ENCODE measurements at regions of chr5 and their contacts with region 1.

Region 1: DNA sequence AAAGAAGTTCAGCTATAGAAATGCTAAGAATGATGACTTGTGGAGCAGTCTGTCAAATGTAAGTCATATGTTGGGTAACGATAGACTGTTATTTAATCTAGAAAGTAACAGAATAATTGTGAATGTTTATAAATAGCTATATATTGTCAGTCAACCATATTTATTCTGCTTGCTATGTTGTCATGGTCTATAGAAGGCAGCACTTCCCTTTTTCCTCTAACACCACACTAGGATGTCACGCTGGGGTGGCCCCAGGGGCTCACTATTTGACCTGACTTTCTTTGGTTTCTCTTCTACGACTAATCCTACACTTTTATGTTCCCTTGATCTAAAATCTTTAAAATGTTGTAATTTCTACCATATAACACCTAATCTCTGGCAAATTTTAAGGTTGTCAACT is 20.5 kb downstream of the ERAP2 start:
- DNase-seq: no peak
- ATAC-seq: no peak
- H3K4me3 Mint-ChIP-seq: peak overlapping the region; percentile 81
- H3K27ac Mint-ChIP-seq: peak overlapping the region; percentile 92
- H3K4me1 Mint-ChIP-seq: peaks cover 36% of the 10 kb centered on the region
- H3K27me3 Mint-ChIP-seq: no peaks in the 10 kb centered on the region

Region 2: DNA sequence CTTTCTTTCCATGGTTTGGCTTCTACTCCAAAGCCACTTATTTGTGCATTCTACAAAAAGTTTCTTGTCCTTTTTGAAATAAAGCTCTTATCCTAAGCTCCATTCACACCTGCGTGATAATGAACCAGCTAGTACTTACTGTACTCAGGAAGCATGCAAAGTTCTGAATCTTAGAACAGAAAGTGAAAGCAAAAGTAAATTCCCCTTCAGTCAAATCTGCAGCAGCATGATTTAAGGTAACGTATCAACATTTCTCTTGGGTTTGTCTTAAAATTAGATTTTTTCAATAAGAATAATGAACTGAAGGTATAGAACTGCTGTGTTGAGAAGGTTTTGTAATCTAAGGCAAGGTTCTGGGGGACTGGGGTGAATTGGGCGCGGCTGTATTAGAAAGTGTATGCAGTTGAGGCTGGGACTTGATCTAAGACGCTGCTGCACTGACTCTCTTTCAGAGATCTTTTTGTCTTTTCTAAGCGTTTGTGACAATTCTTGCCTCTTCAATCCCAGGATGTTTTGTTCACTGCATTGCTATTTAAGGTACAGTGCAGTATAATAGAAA is 20.4 kb before region 1 on chr5 and contains the start of gene ERAP2:
- POLR2A ChIA-PET with region 1: interaction called, 14 read pairs
- DNase-seq: no peak
- ATAC-seq: peak; percentile 69
- H3K4me3 Mint-ChIP-seq: peak within 1 kb of the TSS; percentile 92
- H3K27ac Mint-ChIP-seq: peak within 1 kb of the TSS; percentile 96
- H3K4me1 Mint-ChIP-seq: peaks cover 57% of the 10 kb centered on the region
- H3K27me3 Mint-ChIP-seq: no peaks in the 10 kb centered on the region
- total RNA-seq, gene ERAP2: 107 to 110 TPM

Region 3: DNA sequence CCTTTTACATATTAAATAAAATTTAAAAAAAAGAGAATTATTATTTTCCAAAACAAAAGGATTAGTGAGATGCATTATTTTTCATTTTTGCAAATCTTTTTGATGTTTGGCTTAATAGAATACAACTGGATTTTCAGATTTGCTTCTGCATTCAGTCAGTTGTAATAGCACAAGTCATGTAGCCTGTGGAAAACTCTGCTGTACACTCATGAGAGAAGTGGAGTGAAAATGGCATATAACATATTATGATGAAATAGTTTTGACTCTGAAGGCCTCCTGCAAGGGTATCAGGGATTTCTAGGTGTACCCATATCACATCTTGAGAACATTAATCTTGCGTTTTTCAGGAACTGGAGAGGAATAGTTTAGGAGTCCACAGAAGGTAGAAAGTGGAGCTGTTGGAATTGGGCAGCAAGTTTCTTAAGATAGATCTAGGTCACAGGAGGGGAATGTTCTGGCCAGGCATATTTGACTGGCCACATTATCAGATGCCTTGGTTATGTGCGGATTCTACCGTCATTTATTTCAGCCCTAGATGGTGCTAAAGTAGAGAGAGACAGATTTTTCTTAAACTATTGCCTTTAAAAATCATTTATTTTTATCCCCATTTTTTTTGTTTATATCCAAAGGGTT is 55.4 kb after region 1 on chr5:
- POLR2A ChIA-PET with region 1: no interaction called
- DNase-seq: no peak
- ATAC-seq: no peak
- H3K4me3 Mint-ChIP-seq: no peak overlapping the region
- H3K27ac Mint-ChIP-seq: no peak overlapping the region
- H3K4me1 Mint-ChIP-seq: peaks cover 57% of the 10 kb centered on the region
- H3K27me3 Mint-ChIP-seq: no peaks in the 10 kb centered on the region

Region 4: DNA sequence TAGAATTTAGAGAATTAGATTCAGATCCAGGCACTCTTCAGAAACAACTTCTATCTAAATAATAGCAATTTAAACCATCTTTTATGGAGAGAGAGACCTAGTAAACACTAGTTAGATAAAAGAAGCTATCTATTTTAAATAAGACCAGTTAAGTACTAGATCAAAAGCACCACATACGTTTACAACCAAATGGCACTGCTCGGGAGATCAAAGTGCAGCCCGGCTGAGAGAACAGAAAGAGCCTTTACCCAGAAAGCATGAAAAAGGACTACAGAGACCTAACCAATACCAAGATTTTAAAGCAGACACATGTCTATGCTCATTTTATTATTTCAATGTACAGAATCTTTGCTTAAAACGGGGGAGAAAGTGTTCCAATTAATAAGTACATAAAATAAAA is 214.8 kb after region 1 on chr5:
- POLR2A ChIA-PET with region 1: no interaction called
- DNase-seq: no peak
- ATAC-seq: no peak
- H3K4me3 Mint-ChIP-seq: no peak overlapping the region
- H3K27ac Mint-ChIP-seq: no peak overlapping the region
- H3K4me1 Mint-ChIP-seq: peaks cover 3% of the 10 kb centered on the region
- H3K27me3 Mint-ChIP-seq: peaks cover 2% of the 10 kb centered on the region